GM12878 (cell line): ENCODE measurements at regions of chr14 and their contacts with region 1.

Region 1: DNA sequence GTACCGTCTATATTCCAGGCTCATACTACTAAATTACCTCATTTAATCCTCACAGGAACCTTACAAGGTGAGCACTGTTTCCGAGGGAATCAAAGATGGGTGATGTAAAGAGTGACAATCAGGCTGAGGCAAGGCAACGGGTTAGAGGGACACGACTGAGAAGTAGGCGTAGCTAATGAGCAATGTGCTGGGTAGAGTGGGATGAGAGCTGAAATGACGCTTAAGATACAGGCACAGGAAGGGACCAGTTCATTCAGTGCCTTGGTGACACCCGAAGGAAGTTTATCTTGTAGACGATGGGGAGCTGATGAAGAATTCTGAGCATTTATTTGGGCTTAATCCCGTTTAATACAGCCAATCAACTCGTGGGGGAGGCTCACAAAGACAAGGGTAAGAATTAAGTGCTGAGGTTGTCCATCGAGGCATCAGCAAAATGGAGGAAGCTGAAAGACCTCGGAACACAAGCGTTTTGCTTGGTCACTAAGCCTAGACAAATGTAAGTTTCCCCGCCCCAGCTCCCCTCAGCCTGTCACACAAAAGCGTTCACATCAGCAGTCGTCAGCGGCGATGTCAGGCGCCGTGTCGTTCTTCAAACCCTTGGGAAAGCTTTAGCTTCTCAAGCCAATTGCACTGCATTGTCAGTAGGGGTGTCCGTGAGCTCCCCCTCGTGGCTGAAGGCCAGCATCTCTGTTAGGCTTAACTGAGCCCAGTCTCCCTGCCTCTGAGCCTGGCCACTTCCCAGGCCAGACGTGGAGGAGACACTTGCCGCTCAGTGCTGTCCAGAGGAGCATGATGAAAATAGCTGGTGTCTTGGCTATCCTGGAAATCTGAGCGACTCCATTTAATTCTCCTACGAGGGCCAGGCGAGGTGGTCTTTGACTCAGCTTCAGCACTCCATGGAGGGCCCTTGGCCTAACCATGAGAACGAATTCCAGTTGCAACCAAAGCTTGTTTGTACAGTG is 288.5 kb upstream of the G2E3 start:
- DNase-seq: no peak
- ATAC-seq: peak; percentile 100
- H3K4me3 ChIP-seq: no peak overlapping the region
- H3K27ac ChIP-seq: no peak overlapping the region
- H3K4me1 ChIP-seq: no peaks in the 10 kb centered on the region
- H3K27me3 ChIP-seq: no peaks in the 10 kb centered on the region
- CTCF ChIP-seq: peak; percentile 85 to 95 (median 88)
- EP300 ChIP-seq: no peak
- POLR2A ChIP-seq: no peak
- RAD21 ChIP-seq: peak; percentile 53

Region 2: GRCh38 chr14:28751467-28752058 is 1518.9 kb before region 1 on chr14:
- CTCF ChIA-PET with region 1: interaction called, 5 read pairs
- POLR2A ChIA-PET with region 1: no interaction called
- RAD21 ChIA-PET with region 1: interaction called, 3 read pairs
- SMC1A ChIA-PET with region 1: no interaction called
- in situ Hi-C with region 1: no loop called
- intact Hi-C with region 1: loop called (anchors 2 kb)
- DNase-seq: peak; percentile 7
- ATAC-seq: peak; percentile 90
- H3K4me3 ChIP-seq: no peak overlapping the region
- H3K27ac ChIP-seq: no peak overlapping the region
- H3K4me1 ChIP-seq: no peaks in the 10 kb centered on the region
- H3K27me3 ChIP-seq: peaks cover 0 to 3% of the 10 kb centered on the region in 2 experiments; a peak in 1 of 4 replicates
- CTCF ChIP-seq: peak; percentile 74 to 76 (median 75)
- EP300 ChIP-seq: no peak
- POLR2A ChIP-seq: no peak
- RAD21 ChIP-seq: peak; percentile 66

Region 3: GRCh38 chr14:30283826-30284446 is 13.5 kb after region 1 on chr14:
- CTCF ChIA-PET with region 1: interaction called, 173 read pairs
- POLR2A ChIA-PET with region 1: no interaction called
- RAD21 ChIA-PET with region 1: interaction called, 6 read pairs
- SMC1A ChIA-PET with region 1: interaction called, 9 read pairs
- in situ Hi-C with region 1: no loop called
- intact Hi-C with region 1: no loop called
- DNase-seq: no peak
- ATAC-seq: peak; percentile 71
- H3K4me3 ChIP-seq: no peak overlapping the region
- H3K27ac ChIP-seq: no peak overlapping the region
- H3K4me1 ChIP-seq: no peaks in the 10 kb centered on the region
- H3K27me3 ChIP-seq: no peaks in the 10 kb centered on the region
- CTCF ChIP-seq: peak; percentile 41 to 65 (median 65)
- EP300 ChIP-seq: no peak
- POLR2A ChIP-seq: no peak
- RAD21 ChIP-seq: peak; percentile 41; the same call in 1 of the 2 replicates

Region 4: DNA sequence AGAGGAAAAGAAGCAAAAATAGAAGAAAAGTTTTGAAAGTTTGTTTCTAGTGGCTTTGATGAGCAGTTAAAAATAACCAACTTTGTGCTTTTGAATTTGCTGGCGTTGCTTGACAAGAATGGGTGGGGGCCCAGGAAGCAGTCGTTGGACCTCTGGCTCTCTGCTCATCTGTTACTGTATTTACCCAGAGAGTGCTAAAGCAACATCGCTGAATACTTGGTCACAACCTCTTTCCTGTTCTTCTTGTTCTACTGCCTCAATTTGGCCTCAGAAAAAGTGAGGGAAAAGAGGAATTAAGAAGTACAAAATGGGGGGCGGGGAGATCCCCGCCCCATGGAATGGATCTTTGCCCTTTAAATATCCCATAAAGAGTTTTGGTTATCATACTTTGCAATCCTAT is 66.9 kb after region 1 on chr14:
- CTCF ChIA-PET with region 1: interaction called, 13 read pairs
- POLR2A ChIA-PET with region 1: no interaction called
- RAD21 ChIA-PET with region 1: no interaction called
- SMC1A ChIA-PET with region 1: interaction called, 4 read pairs
- in situ Hi-C with region 1: no loop called
- intact Hi-C with region 1: no loop called
- DNase-seq: no peak
- ATAC-seq: no peak
- H3K4me3 ChIP-seq: no peak overlapping the region
- H3K27ac ChIP-seq: no peak overlapping the region
- H3K4me1 ChIP-seq: no peaks in the 10 kb centered on the region
- H3K27me3 ChIP-seq: no peaks in the 10 kb centered on the region
- CTCF ChIP-seq: no peak
- EP300 ChIP-seq: no peak
- POLR2A ChIP-seq: no peak
- RAD21 ChIP-seq: no peak

Region 5: DNA sequence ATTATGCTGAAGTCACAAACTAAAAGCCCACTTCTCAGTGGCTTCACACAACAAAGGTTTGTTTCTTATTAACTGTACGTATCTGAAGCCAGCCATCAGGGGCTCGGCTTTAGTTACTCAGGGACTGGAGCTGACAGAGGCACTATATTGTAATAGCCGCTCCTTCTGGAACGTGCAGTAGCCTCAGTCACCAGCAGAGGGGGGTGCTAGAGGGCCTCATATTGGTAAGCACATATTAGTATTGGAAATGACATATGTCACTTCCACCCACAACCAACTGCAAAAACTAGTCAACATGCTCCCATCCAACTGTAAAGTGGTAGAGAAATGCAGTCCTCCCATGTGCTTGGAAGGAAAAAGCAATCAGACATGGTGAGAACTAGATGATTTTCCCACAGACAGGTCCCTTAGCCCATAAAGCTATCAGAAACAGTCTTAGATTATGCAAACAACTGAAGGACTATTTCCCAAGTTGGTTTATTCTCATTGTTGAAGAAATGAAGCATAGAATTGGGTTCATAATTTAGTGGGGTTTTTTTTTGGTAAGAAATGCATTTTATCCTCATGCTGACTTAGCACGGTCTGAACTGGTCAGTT is 104.9 kb after region 1 on chr14:
- CTCF ChIA-PET with region 1: interaction called, 14 read pairs
- POLR2A ChIA-PET with region 1: no interaction called
- RAD21 ChIA-PET with region 1: interaction called, 4 read pairs
- SMC1A ChIA-PET with region 1: interaction called, 13 read pairs
- in situ Hi-C with region 1: no loop called
- intact Hi-C with region 1: loop called (anchors 5 kb)
- DNase-seq: no peak
- ATAC-seq: peak; percentile 99
- H3K4me3 ChIP-seq: no peak overlapping the region
- H3K27ac ChIP-seq: no peak overlapping the region
- H3K4me1 ChIP-seq: no peaks in the 10 kb centered on the region
- H3K27me3 ChIP-seq: 0 out of 4 replicates have a peak, but pooled peaks cover 0 to 2% of the 10 kb centered on the region in 2 experiments
- CTCF ChIP-seq: peak; percentile 72 to 89 (median 87)
- EP300 ChIP-seq: no peak
- POLR2A ChIP-seq: no peak
- RAD21 ChIP-seq: peak; percentile 62

Region 6: GRCh38 chr14:30521899-30522736 is 251.6 kb after region 1 on chr14:
- CTCF ChIA-PET with region 1: interaction called, 17 read pairs
- POLR2A ChIA-PET with region 1: no interaction called
- RAD21 ChIA-PET with region 1: interaction called, 6 read pairs
- SMC1A ChIA-PET with region 1: interaction called, 4 read pairs
- in situ Hi-C with region 1: no loop called
- intact Hi-C with region 1: loop called (anchors 5 kb)
- DNase-seq: peak; percentile 9
- ATAC-seq: peak; percentile 65
- H3K4me3 ChIP-seq: no peak overlapping the region
- H3K27ac ChIP-seq: no peak overlapping the region
- H3K4me1 ChIP-seq: no peaks in the 10 kb centered on the region
- H3K27me3 ChIP-seq: no peaks in the 10 kb centered on the region
- CTCF ChIP-seq: peak; percentile 65 to 70 (median 68)
- EP300 ChIP-seq: no peak
- POLR2A ChIP-seq: no peak
- RAD21 ChIP-seq: peak; percentile 64